IMR-90 (cell line): ENCODE measurements at regions of chr19 and their contacts with region 1.

Region 1: DNA sequence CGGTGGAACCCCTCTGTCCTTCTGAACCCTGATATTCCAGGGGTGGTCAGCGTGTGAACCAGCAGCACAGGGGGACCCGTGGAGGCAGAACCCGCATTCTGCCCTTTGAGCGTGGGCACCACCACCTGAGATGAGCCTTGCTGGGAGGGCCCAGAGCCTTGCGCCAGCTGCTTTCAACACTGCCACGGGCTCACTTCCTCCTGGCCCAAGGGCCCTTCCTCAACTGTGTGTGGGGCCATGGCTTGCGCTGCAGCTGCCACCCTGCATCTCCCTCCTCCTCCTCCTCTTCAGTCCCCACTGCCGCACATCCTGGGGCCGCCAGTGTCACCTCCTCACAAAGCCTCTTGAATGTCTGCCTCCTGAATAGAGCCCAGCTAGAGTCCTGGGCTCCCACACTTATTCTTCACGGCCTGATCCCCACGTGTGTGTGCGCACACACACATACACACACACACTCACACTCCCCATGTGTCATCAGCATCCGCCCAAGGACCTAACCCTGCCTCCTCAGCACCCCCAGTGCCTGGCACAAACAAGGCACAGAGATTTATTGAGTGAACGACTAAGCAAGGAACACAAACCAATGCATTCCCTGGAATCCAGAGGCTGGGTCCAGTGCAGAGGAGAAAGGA is 26.9 kb upstream of the TMEM160 start:
- DNase-seq: peak; percentile 12
- ATAC-seq: no peak
- H3K4me3 ChIP-seq: no peak overlapping the region
- H3K27ac ChIP-seq: no peak overlapping the region
- H3K4me1 ChIP-seq: peaks cover 5% of the 10 kb centered on the region
- H3K27me3 ChIP-seq: no peaks in the 10 kb centered on the region
- CTCF ChIP-seq: no peak
- POLR2A ChIP-seq: no peak
- RAD21 ChIP-seq: no peak

Region 2: GRCh38 chr19:47013041-47013517 is 62.2 kb before region 1 on chr19:
- CTCF ChIA-PET with region 1: interaction called, 3 read pairs
- POLR2A ChIA-PET with region 1: no interaction called
- dilution Hi-C with region 1: no loop called
- in situ Hi-C with region 1: no loop called
- intact Hi-C with region 1: loop called (anchors 2 kb)
- DNase-seq: peak; percentile 51
- ATAC-seq: peak; percentile 99
- H3K4me3 ChIP-seq: no peak overlapping the region
- H3K27ac ChIP-seq: no peak overlapping the region
- H3K4me1 ChIP-seq: no peaks in the 10 kb centered on the region
- H3K27me3 ChIP-seq: no peaks in the 10 kb centered on the region
- CTCF ChIP-seq: peak; percentile 98
- POLR2A ChIP-seq: no peak
- RAD21 ChIP-seq: peak; percentile 91

Region 3: GRCh38 chr19:47057328-47057727 is 18.0 kb before region 1 on chr19:
- CTCF ChIA-PET with region 1: no interaction called
- POLR2A ChIA-PET with region 1: interaction called, 14 read pairs
- dilution Hi-C with region 1: no loop called
- in situ Hi-C with region 1: no loop called
- intact Hi-C with region 1: no loop called
- DNase-seq: peak; percentile 76
- ATAC-seq: no peak; the same call in none of the 2 replicates
- H3K4me3 ChIP-seq: no peak overlapping the region
- H3K27ac ChIP-seq: no peak overlapping the region
- H3K4me1 ChIP-seq: peaks cover 8% of the 10 kb centered on the region; the same call in 1 of the 2 replicates
- H3K27me3 ChIP-seq: no peaks in the 10 kb centered on the region
- CTCF ChIP-seq: no peak
- POLR2A ChIP-seq: no peak
- RAD21 ChIP-seq: no peak

Region 4: DNA sequence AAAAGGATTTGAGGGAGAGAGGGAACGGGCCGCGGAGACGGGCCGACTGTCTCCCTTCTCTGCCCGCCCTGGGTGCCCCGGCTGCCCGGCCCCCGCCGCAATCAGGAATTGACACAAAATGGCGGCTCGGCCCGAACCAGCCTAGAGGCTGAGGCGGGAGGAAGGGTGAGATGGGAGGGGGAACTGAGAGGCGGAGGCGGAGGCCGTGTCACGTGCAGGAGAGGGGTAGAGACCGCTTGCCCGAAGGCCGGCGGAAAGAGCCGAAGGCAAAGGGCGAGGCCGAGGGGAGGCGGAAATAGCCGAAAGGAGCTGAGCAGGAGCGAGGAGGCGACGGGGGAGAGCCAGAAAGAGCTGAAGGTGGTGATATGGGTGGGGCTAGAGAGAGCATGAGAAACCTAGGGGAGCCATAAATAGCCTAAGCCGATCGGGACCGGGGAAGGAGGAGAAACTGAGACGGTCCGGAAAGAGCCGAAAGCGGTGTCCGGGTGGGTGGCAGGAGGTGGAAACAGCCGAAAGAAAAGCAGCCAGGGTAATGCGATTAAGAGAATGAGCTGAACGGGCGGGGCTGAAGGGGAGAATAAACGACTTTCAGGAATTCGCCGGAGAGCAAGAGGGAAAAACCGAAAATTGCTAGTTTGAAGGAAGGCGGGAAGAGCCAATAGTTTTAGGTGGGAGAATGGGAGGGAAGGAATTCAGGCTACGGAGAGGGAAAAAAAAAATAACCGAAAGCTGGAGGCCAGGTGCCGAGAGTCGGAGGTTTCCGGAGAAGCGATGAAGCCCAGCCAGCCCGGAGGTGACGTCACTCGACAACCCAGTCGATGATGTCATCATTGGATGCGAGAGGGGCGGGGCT is 37.9 kb after region 1 on chr19 and contains the start of gene ZC3H4:
- CTCF ChIA-PET with region 1: interaction called, 9 read pairs
- POLR2A ChIA-PET with region 1: no interaction called
- dilution Hi-C with region 1: no loop called
- in situ Hi-C with region 1: no loop called
- intact Hi-C with region 1: loop called (anchors 5 kb)
- DNase-seq: peak; percentile 99
- ATAC-seq: peak; percentile 87
- H3K4me3 ChIP-seq: peak within 1 kb of the TSS; percentile 77
- H3K27ac ChIP-seq: peak within 1 kb of the TSS; percentile 96
- H3K4me1 ChIP-seq: peaks cover 7% of the 10 kb centered on the region
- H3K27me3 ChIP-seq: no peaks in the 10 kb centered on the region
- CTCF ChIP-seq: no peak
- POLR2A ChIP-seq: peak; percentile 96
- RAD21 ChIP-seq: no peak
- total RNA-seq, gene ZC3H4: 3.9 and 5.3 TPM in 2 replicates

Region 5: DNA sequence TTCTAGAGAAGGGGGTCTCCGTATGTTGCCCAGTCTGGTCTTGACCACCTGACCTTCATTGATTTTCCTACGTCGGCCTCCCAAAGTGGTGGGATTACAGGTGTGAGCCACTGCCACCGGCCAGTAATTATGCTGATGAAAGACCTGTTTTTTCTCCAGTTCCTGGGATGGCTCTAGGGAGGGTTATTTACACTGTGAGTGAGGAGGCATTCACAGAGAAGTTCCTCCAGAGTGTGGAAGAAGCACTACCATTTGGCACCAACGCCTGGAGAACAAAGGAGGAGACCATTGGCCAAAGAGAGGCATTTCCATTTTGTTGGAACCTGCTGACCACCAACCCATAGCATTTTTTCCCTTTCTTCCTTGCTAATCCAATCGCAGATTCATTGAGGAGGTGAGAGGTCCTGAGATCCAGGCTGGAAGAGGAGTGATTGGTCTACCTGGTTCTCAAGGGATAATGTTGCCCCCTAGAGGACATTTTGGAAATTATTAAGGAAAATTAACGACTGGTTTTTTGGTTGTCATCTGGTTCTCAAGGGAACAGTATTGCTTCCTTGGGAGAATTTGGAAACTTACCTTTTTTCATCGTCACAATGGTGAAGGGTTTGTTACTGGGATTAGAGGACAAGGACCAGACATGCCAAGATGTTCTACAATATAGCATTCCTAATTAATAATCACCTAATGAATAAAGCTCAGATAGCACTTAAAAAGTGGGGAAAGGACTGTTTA is 49.8 kb after region 1 on chr19:
- CTCF ChIA-PET with region 1: interaction called, 4 read pairs
- POLR2A ChIA-PET with region 1: no interaction called
- dilution Hi-C with region 1: no loop called
- in situ Hi-C with region 1: loop called (anchors 5 kb)
- intact Hi-C with region 1: loop called (anchors 1 kb)
- DNase-seq: peak; percentile 78
- ATAC-seq: peak; percentile 71
- H3K4me3 ChIP-seq: no peak overlapping the region
- H3K27ac ChIP-seq: no peak overlapping the region
- H3K4me1 ChIP-seq: peaks cover 5% of the 10 kb centered on the region
- H3K27me3 ChIP-seq: no peaks in the 10 kb centered on the region
- CTCF ChIP-seq: peak; percentile 83
- POLR2A ChIP-seq: no peak
- RAD21 ChIP-seq: peak; percentile 76